ENCODE measurements at regions of chr3 and their contacts with region 1.

Region 1: GRCh38 chr3:14203521-14204079 is 25.0 kb downstream of the LSM3 start:
- DNase-seq: peak; percentile 76 to 78
- H3K4me3 ChIP-seq: no peak overlapping the region
- H3K4me3 Mint-ChIP-seq: peak overlapping the region; percentile 44
- H3K27ac Mint-ChIP-seq: peak overlapping the region; percentile 89
- H3K4me1 ChIP-seq: peaks cover 77% of the 10 kb centered on the region
- H3K4me1 Mint-ChIP-seq: peaks cover 53% of the 10 kb centered on the region
- H3K27me3 ChIP-seq: no peaks in the 10 kb centered on the region
- H3K27me3 Mint-ChIP-seq: no peaks in the 10 kb centered on the region
- CTCF ChIP-seq: peak; percentile 78 to 83

Region 2: DNA sequence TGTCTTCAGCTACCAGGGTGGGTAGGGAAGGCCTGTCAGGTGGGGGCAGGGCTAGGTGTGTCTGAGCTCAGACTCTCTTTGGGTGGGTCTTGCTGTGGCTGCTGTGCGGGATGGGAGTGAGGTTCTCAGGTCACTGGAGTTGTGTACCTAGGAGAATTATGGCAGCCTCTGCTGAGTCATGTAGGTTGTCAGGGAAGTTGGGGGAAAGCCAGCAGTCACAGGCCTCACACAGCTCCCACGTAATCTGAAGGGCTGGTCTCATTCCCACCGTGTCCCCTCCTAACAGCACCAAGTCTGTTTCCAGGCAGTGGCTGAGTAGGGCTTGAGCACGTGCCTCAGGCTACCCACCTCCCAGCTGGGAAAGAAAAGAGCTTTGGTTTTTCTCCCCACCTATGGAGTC is 145.9 kb before region 1 on chr3:
- CTCF ChIA-PET with region 1: no interaction called
- POLR2A ChIA-PET with region 1: no interaction called
- intact Hi-C with region 1: no loop called
- DNase-seq: no peak
- H3K4me3 ChIP-seq: no peak overlapping the region
- H3K4me3 Mint-ChIP-seq: no peak overlapping the region
- H3K27ac Mint-ChIP-seq: no peak overlapping the region
- H3K4me1 ChIP-seq: no peaks in the 10 kb centered on the region
- H3K4me1 Mint-ChIP-seq: no peaks in the 10 kb centered on the region
- H3K27me3 ChIP-seq: no peaks in the 10 kb centered on the region
- H3K27me3 Mint-ChIP-seq: peaks cover 3% of the 10 kb centered on the region
- CTCF ChIP-seq: no peak

Region 3: DNA sequence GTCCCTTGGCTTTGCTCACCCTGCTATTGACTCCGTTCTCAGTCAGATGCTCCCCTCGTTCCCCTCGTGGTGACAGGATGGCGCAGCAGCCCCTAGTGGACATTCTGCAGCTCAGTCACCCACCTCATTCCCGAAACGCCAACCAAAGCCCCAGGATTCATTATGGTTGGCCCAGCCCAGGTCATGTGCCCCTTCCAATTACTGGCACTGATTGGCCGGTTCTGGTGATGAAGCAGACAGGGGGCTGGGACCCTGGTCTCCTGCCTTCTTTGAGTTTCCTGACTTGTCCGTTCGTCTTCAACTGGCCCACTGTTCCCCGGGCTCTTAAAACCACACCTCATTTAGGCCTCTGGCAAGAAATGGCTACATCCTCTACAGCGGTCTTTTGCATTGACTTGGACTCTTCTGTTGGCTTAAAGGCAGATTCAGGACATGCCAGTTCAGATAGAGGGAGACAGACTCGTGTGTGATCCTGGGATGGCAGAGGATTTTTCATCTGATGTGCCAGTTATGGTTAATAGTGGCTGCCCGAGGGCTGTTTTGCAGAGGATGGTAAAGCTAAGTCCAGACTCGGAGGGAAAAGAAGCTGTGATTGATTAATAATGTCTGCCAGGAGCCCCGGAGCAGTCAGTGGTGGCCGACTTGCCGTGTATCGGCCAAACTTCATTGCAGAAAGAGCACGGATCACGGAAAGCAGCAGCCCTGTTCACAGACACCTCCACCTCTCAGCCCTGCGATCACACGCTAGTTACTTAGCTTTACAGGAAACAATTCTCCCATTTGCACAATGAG is 12.9 kb after region 1 on chr3:
- CTCF ChIA-PET with region 1: interaction called, 22 read pairs
- POLR2A ChIA-PET with region 1: interaction called, 3 read pairs
- intact Hi-C with region 1: no loop called
- DNase-seq: no peak
- H3K4me3 ChIP-seq: no peak overlapping the region
- H3K4me3 Mint-ChIP-seq: no peak overlapping the region
- H3K27ac Mint-ChIP-seq: no peak overlapping the region
- H3K4me1 ChIP-seq: peaks cover 25% of the 10 kb centered on the region
- H3K4me1 Mint-ChIP-seq: peaks cover 16% of the 10 kb centered on the region
- H3K27me3 ChIP-seq: no peaks in the 10 kb centered on the region
- H3K27me3 Mint-ChIP-seq: no peaks in the 10 kb centered on the region
- CTCF ChIP-seq: peak; percentile 11 to 20

Region 4: DNA sequence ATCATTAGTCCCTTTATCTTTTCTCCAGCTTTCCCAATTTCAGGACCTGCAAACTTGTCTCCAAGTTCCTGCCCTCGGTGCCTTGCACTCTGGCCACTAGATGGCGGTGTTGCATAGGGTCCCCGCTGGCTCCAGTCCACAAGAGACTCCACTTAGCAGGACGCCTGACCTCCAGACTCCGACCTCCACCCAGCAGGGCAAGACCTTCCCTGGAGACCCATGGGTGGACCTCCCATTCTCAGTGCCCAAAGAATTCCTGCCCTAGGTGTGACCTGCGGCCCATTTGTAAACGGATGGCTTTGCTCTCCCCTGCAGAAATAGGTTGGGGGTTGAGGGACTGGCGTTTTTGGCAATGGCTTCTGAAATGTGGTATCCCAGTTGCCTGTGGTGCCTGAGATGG is 57.6 kb after region 1 on chr3:
- CTCF ChIA-PET with region 1: interaction called, 35 read pairs
- POLR2A ChIA-PET with region 1: no interaction called
- intact Hi-C with region 1: loop called (anchors 1 kb)
- DNase-seq: peak; percentile 87 to 91
- H3K4me3 ChIP-seq: no peak overlapping the region
- H3K4me3 Mint-ChIP-seq: no peak overlapping the region
- H3K27ac Mint-ChIP-seq: no peak overlapping the region
- H3K4me1 ChIP-seq: peaks cover 29% of the 10 kb centered on the region
- H3K4me1 Mint-ChIP-seq: peaks cover 27% of the 10 kb centered on the region
- H3K27me3 ChIP-seq: no peaks in the 10 kb centered on the region
- H3K27me3 Mint-ChIP-seq: no peaks in the 10 kb centered on the region
- CTCF ChIP-seq: peak; percentile 87 to 97

Region 5: GRCh38 chr3:14369675-14370669 is 166.4 kb after region 1 on chr3:
- CTCF ChIA-PET with region 1: interaction called, 13 read pairs
- POLR2A ChIA-PET with region 1: no interaction called
- intact Hi-C with region 1: no loop called
- DNase-seq: peak; percentile 75
- H3K4me3 ChIP-seq: no peak overlapping the region
- H3K4me3 Mint-ChIP-seq: no peak overlapping the region
- H3K27ac Mint-ChIP-seq: peak overlapping the region; percentile 26
- H3K4me1 ChIP-seq: peaks cover 44% of the 10 kb centered on the region
- H3K4me1 Mint-ChIP-seq: peaks cover 41% of the 10 kb centered on the region
- H3K27me3 ChIP-seq: no peaks in the 10 kb centered on the region
- H3K27me3 Mint-ChIP-seq: no peaks in the 10 kb centered on the region
- CTCF ChIP-seq: peak in 1 of 2 experiments; percentile 77

Region 6: DNA sequence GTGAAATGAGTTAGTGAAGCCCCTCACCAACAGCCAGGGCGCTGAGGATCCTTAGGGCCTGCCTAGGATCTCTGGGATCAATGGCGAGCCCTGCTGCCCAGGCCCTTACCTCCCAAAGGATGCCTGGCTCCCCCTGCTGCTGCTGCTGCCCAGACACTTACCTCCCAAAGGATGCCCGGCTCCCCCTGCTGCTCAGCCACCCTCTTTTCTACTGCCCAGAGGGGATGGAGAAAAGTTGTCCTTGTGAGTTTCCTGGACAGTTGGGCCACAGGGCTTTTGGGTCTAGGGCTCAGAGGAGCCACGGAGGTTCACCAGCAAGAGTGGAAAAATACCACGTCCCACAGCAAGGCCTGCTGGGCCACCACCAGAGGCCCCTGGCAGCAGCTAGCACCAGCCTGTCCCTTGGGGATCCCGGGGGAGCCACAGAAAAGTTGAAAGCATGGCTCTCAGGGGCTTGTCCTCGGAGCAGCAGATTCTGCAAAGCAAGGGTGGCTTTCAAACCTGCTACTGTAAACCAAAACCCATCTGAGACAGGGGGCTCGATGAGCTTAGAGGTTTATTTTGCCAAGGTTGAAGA is 258.2 kb after region 1 on chr3:
- CTCF ChIA-PET with region 1: interaction called, 24 read pairs
- POLR2A ChIA-PET with region 1: interaction called, 5 read pairs
- intact Hi-C with region 1: loop called (anchors 1 kb)
- DNase-seq: peak; percentile 74 to 78
- H3K4me3 ChIP-seq: no peak overlapping the region
- H3K4me3 Mint-ChIP-seq: no peak overlapping the region
- H3K27ac Mint-ChIP-seq: peak overlapping the region; percentile 70
- H3K4me1 ChIP-seq: no peaks in the 10 kb centered on the region
- H3K4me1 Mint-ChIP-seq: no peaks in the 10 kb centered on the region
- H3K27me3 ChIP-seq: no peaks in the 10 kb centered on the region
- H3K27me3 Mint-ChIP-seq: no peaks in the 10 kb centered on the region
- CTCF ChIP-seq: peak; percentile 65 to 95